Ovary (tissue), 10 donors: ENCODE measurements at regions of chr11 and their contacts with region 1.

Region 1: GRCh38 chr11:76207642-76208401 is 1.5 kb upstream of the WNT11 start:
- DNase-seq: peak; percentile 75 to 90 (median 82)
- H3K4me3 ChIP-seq: peak overlapping the region; percentile 31
- H3K27ac ChIP-seq: no peak overlapping the region
- H3K4me1 ChIP-seq: peaks cover 15% of the 10 kb centered on the region
- H3K27me3 ChIP-seq: no peaks in the 10 kb centered on the region
- CTCF ChIP-seq: peak; percentile 91 to 98 (median 94)
- EP300 ChIP-seq: no peak
- POLR2A ChIP-seq: no peak

Region 2: DNA sequence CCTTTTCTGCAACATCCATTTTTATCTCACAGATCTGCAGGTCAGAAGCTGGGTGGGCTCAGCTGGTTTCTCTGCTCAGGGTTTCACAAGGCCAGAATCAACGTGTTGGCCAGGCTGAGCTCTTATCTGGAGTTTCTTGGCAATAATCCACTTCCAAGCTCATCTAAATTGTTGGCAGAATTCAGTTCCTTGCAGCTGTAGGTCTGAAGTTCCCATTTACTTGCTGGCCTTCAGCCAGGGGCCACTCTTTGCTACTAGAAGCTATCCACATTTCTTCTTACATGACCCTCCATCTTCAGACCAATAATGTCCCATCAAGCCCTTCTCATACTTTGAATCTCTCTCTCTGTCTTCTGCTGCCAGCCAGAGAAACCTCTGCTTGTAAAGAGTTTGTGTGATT is 105.0 kb before region 1 on chr11:
- intact Hi-C with region 1: no loop called
- DNase-seq: peak in 3 of 5 donors; percentile 12 to 44 (median 24)
- H3K4me3 ChIP-seq: no peak overlapping the region
- H3K27ac ChIP-seq: no peak overlapping the region
- H3K4me1 ChIP-seq: peaks cover 4% of the 10 kb centered on the region
- H3K27me3 ChIP-seq: no peaks in the 10 kb centered on the region
- CTCF ChIP-seq: no peak
- EP300 ChIP-seq: no peak
- POLR2A ChIP-seq: no peak

Region 3: DNA sequence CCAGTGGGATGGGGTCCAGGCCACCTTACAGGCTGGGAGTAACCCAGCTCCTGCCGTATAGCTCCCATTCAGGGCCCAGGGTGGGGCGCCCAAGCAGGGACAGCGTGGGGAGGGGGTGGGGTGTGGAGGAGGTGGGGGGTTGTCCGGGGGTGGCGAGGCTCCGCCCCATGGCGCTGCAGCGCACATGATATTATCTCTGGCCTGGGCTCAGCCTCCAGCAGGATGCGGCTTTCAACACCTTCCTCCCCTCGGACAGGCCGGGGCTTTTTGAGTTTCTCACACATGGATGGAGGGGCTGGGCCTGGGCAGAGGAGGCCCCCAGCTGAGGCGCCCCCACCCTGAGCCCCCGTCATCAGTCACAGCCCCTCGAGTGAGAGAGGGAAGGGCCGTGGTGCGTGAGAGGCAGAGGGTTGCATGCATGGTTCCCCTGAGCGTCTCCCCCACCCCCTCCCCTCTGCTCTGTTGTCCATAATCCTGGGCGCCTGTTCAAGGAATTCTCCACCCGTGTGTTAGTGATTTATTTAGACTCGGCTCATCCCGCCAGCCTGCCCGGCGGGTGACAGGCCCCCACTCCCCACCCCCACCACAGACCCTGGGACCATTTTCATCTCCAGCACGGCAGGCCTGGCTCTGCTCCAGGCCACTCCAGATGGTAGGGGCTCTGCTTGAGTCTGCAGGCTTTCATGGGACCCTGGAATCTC is 46.4 kb before region 1 on chr11:
- intact Hi-C with region 1: no loop called
- DNase-seq: peak in 4 of 5 donors; percentile 42 to 50 (median 44)
- H3K4me3 ChIP-seq: no peak overlapping the region
- H3K27ac ChIP-seq: no peak overlapping the region
- H3K4me1 ChIP-seq: peaks cover 3% of the 10 kb centered on the region
- H3K27me3 ChIP-seq: no peaks in the 10 kb centered on the region
- CTCF ChIP-seq: no peak
- EP300 ChIP-seq: no peak
- POLR2A ChIP-seq: no peak

Region 4: GRCh38 chr11:76235233-76236091 is 27.6 kb after region 1 on chr11:
- intact Hi-C with region 1: loop called in 1 of 4 experiments (anchors 2 kb)
- DNase-seq: peak; percentile 91 to 95 (median 93)
- H3K4me3 ChIP-seq: peak overlapping the region; percentile 63
- H3K27ac ChIP-seq: peak overlapping the region; percentile 81 to 87
- H3K4me1 ChIP-seq: peaks cover 6% of the 10 kb centered on the region
- H3K27me3 ChIP-seq: no peaks in the 10 kb centered on the region
- CTCF ChIP-seq: no peak
- EP300 ChIP-seq: no peak
- POLR2A ChIP-seq: peak; percentile 54

Region 5: DNA sequence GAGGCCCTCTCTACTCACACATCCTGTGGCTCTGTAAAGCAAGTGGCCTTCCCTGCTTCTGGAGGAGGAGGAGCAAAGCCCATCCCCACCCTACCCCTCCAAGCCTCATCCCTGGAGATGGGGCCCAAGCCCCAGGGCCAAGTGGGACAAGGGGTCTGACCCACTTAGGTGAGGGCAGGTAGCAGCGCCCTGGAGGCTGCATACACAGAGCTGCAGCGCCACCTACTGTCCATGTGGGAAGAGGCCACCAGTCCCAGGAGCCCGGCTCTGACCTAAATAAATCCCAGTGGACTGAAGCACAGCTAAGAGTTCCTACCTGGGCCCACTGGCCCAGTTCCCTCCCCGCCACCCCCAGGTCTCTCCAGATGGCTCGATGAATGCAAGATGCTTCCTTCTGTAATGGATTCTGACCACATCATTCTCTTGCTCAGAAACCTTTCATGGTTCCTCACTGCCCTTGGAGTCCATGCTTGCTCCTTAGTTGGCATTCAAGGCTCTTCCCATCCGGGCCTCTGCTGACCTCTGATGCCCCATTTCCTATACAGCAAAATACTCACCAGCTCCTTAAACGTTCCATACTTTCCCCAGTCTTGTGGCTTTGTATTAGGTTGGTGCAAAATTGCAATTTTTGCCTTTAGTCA is 111.0 kb after region 1 on chr11:
- intact Hi-C with region 1: loop called (anchors 2 to 5 kb)
- DNase-seq: peak; percentile 72 to 85 (median 79)
- H3K4me3 ChIP-seq: no peak overlapping the region
- H3K27ac ChIP-seq: no peak overlapping the region
- H3K4me1 ChIP-seq: peaks cover 1% of the 10 kb centered on the region
- H3K27me3 ChIP-seq: no peaks in the 10 kb centered on the region
- CTCF ChIP-seq: peak; percentile 79 to 86 (median 85)
- EP300 ChIP-seq: no peak
- POLR2A ChIP-seq: no peak

Region 6: GRCh38 chr11:76512851-76513653 is 305.2 kb after region 1 on chr11:
- intact Hi-C with region 1: loop called in 1 of 4 experiments (anchors 5 kb)
- DNase-seq: no peak
- H3K4me3 ChIP-seq: no peak overlapping the region
- H3K27ac ChIP-seq: no peak overlapping the region
- H3K4me1 ChIP-seq: peaks cover 4% of the 10 kb centered on the region
- H3K27me3 ChIP-seq: no peaks in the 10 kb centered on the region
- CTCF ChIP-seq: no peak
- EP300 ChIP-seq: no peak
- POLR2A ChIP-seq: no peak